Endothelial cell of umbilical vein (primary cell): ENCODE measurements at regions of chr2 and their contacts with region 1.

Region 1: GRCh38 chr2:129923265-129924091 is 56.0 kb upstream of the RAB6C start:
- DNase-seq: peak; percentile 36
- H3K4me3 ChIP-seq: no peak overlapping the region
- H3K27ac ChIP-seq: no peak overlapping the region
- H3K4me1 ChIP-seq: no peaks in the 10 kb centered on the region
- H3K27me3 ChIP-seq: no peaks in the 10 kb centered on the region
- CTCF ChIP-seq: peak; percentile 12 to 37
- POLR2A ChIP-seq: no peak

Region 2: DNA sequence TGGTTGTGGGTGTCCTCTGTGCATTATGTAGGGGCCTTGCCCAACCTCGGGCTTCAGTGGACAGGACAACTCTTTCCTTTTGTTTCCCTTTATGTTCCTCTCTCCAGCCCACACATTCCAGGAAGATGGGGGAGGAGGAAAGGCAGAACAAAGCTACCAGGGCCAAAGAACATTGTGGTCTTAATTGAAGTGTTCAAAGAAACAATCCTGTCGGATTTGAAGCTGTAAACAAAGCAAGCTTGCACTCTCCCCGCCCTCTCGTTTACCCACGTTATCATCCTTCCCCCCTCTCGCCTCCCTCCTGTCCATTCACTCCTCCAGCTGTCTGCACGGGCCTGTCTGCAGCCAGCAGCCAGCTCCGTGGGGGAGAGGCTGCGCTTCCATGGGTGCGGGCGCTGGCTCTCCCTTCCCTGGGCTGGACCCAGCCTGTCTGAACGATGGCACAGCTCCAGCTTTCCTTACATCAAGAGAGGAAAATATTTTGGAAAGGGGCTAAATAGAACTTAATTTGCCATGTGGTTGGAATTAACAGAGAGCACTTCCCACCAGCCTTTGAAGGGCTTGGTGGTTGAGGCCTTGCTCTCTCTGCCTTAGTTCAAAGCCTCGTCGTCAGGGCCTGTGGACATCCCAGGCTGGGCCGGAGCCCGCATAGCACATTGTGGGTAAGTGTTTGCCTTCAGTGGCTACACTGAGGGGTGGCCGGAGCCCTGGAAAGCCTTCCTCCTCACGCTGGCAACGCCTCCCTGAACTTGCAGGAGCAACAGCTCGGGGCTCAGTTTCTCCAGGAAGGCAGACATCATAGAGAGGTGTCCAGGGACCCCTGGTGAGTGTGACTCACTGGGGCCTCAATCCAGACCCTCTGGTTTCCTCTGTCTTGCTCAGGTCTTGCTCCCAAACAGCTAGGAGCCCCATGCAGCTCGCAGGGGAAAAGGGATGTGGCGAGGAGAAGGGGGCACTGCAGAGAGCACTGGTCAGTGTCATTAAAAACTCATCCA is 1544.2 kb before region 1 on chr2:
- CTCF ChIA-PET with region 1: no interaction called
- POLR2A ChIA-PET with region 1: no interaction called
- dilution Hi-C with region 1: no loop called
- intact Hi-C with region 1: no loop called
- DNase-seq: peak; percentile 48
- H3K4me3 ChIP-seq: no peak overlapping the region
- H3K27ac ChIP-seq: no peak overlapping the region
- H3K4me1 ChIP-seq: no peaks in the 10 kb centered on the region
- H3K27me3 ChIP-seq: peaks cover 0 to 3% of the 10 kb centered on the region in 2 experiments
- CTCF ChIP-seq: no peak
- POLR2A ChIP-seq: no peak

Region 3: DNA sequence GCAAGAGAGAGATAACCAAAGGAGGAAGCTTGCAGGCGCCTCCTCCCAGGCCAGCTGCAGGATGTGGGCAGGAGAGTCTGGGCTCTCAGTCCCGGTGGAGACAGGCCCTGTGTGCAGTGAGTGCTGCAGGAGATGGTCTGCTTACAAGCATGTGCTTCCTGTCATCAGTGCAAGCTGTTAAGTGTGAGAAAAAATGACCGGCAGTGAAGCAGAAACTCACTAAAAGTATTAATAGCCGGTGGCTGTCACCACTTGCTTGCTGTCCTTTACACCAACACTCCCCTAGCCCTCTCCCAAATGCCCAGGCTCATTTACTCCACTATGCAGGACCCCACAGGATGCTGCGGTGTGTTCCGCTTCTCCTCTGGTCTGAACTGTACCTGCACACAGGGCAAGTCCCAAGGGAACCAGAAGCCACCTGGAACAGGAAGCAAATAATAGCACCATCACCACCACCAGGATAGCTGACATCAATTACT is 1169.2 kb before region 1 on chr2:
- CTCF ChIA-PET with region 1: no interaction called
- POLR2A ChIA-PET with region 1: no interaction called
- dilution Hi-C with region 1: no loop called
- intact Hi-C with region 1: loop called (anchors 5 kb)
- DNase-seq: no peak
- H3K4me3 ChIP-seq: no peak overlapping the region
- H3K27ac ChIP-seq: no peak overlapping the region
- H3K4me1 ChIP-seq: no peaks in the 10 kb centered on the region
- H3K27me3 ChIP-seq: no peaks in the 10 kb centered on the region
- CTCF ChIP-seq: no peak
- POLR2A ChIP-seq: no peak

Region 4: DNA sequence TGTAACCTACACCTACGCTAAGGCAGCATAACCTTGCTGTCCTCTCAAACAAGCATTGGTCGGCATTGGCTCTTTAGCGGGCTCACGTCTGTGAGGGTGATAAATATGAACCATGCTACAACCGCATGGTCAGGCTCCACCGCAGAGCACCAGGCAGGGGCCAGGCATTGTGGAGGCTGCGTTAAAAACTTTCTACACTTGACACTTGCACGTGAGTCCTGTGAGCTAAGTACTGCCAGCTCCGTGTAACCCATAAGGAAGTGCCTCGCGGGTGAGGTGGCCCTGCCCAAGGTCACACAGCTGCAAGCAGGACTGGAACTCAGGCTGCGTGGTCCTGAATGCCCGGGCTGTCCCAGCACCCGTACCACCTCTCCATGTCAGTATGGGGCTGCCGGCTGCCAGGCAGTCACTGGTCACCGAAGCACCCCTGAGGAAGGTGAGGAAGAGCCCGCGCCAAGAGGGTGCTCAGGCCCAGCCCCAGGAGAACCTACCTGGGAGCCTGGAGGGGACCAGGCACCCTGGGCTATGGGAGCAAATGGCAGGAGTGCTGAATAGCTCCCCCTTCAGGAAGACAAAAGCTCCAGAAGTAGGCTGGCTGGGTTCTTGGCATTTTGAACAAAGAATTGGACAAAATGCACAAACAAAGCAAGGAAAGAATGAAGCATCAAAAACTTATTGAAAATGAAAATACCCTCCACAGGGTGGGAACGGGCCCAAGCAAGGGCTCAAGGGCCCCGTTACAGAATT is 215.1 kb before region 1 on chr2:
- CTCF ChIA-PET with region 1: no interaction called
- POLR2A ChIA-PET with region 1: no interaction called
- dilution Hi-C with region 1: no loop called
- intact Hi-C with region 1: no loop called
- DNase-seq: no peak
- H3K4me3 ChIP-seq: no peak overlapping the region
- H3K27ac ChIP-seq: no peak overlapping the region
- H3K4me1 ChIP-seq: no peaks in the 10 kb centered on the region
- H3K27me3 ChIP-seq: no peaks in the 10 kb centered on the region
- CTCF ChIP-seq: no peak
- POLR2A ChIP-seq: no peak

Region 5: DNA sequence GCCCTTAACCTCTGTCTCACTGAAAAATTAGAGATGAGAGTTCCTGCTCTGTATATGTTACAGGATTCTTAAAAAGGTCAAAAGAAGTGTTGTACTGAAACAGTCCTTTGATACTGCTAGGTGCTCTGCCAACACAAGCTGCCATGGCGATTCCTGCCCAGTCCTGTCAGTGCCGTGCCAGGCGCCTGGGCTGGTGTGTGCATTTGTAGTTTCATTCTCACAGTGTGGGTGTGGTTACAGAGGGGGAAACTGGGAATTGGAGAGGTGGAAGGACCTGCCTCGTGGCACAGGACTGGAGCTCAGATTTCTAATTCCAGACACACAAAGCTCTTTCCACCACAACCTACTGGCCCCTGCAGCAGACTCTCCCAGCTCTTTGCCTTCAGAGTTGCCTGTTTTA is 66.3 kb before region 1 on chr2:
- CTCF ChIA-PET with region 1: no interaction called
- POLR2A ChIA-PET with region 1: no interaction called
- dilution Hi-C with region 1: no loop called
- intact Hi-C with region 1: no loop called
- DNase-seq: no peak
- H3K4me3 ChIP-seq: no peak overlapping the region
- H3K27ac ChIP-seq: no peak overlapping the region
- H3K4me1 ChIP-seq: peaks cover 2% of the 10 kb centered on the region
- H3K27me3 ChIP-seq: no peaks in the 10 kb centered on the region
- CTCF ChIP-seq: no peak
- POLR2A ChIP-seq: no peak

Region 6: DNA sequence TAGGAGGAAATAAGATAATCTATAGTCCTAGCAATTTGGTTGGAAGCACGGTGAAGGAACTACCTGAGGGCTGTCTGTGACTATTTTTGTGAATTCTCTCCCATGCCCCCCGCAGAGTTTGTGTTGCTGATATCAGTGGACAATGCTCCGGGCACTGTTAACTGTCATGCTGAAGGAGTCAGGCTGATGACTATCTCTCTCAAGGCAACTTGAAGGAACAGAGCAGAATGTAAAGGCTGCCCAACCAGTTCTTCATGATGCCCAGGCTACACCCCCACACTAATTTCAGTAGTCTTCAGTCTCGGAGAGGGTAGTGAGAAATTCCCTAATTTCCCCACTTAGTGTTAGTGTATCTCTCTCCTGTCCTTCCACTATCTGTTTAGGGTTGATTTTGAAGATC is 34.4 kb after region 1 on chr2:
- CTCF ChIA-PET with region 1: no interaction called
- POLR2A ChIA-PET with region 1: no interaction called
- dilution Hi-C with region 1: no loop called
- intact Hi-C with region 1: no loop called
- DNase-seq: no peak
- H3K4me3 ChIP-seq: no peak overlapping the region
- H3K27ac ChIP-seq: no peak overlapping the region
- H3K4me1 ChIP-seq: no peaks in the 10 kb centered on the region
- H3K27me3 ChIP-seq: no peaks in the 10 kb centered on the region
- CTCF ChIP-seq: no peak
- POLR2A ChIP-seq: no peak